ENCODE measurements at regions of chr4 and their contacts with region 1.

Region 1: DNA sequence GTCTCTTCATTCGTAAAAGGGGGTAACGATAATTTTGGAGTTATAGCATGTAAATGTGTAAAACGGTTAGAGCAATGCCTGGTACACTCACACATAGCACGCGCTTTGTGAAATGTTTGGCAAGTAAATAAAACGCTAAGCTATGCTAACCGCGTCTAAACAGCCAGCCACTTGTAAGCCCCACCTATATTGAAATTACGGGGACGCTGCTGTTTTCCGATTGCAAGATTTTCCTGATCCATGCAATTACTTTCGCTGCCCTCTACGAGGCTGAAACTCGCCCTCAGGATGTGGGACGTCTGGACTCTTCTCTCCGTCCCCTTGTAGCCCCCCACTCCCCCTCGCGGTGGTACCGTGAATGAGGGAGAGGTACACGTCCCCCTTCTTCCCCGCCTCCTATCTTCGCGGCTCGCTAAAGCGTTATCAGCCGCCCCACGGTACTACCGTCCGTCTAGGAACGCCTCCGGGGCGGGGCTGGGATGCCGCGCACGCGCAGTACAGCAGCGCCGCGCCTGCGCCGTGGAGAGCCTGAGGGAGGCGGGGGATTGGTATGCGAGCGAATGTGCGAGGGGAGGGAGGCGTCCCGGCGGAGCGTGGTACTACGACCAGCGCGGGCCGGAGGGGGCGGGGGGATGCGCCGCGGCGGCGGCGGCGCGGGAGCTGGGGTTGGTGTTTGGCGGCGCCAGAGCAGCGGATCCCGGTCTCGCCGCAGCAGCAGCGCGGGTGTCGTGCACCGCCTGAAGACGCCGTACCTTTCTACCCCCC is at the start of gene STIM2:
- DNase-seq: peak; percentile 98
- H3K4me3 ChIP-seq: peak within 1 kb of the TSS; percentile 71 to 95 (median 86)
- H3K27ac ChIP-seq: peak within 1 kb of the TSS; percentile 95 to 98 (median 97)
- H3K4me1 ChIP-seq: peaks cover 0 to 41% (median 27%) of the 10 kb centered on the region in 4 donors
- H3K27me3 ChIP-seq: no peaks in the 10 kb centered on the region
- CTCF ChIP-seq: peak in 2 of 4 experiments; percentile 29 to 37
- EP300 ChIP-seq: no peak
- POLR2A ChIP-seq: peak; percentile 46 to 77
- total RNA-seq, gene STIM2: 10.7 to 15.3 (median 14.7) TPM

Region 2: DNA sequence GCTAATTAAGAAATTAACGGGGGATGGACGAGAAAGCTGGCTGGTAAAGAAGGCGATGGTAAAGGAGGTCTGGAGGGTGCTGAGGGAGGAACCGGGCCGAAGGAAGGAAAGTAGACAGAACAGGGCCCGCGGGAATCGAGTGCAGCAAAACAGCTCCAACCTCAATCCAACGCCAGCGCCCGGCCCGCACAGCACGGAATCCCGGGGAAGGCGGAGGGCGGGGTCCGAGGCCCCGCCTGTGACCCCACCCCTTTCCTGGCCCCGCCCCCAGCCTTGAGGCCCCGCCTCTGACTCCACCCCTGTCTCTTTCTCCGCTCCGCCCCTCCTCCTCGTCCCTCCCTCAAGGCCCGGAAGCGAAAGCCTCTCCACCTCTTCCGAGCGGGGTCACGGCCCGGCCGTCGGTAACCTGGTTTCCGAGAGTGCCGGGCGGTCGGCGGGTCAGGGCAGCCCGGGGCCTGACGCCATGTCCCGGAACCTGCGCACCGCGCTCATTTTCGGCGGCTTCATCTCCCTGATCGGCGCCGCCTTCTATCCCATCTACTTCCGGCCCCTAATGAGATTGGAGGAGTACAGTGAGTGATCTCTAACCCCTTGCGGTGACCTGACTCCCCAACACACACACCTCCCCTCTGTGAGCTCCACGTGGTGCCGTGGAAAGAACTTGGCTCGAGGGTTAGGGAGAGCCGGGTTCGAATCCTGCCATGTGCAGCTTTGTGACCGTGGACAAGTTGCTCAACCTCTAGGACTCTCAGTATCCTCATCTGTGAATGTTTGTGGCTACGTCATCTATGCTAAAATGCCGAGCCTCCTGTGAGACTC is 946.3 kb before region 1 on chr4 and contains the start of gene SMIM20:
- intact Hi-C with region 1: loop called (anchors 5 kb)
- DNase-seq: peak; percentile 96
- H3K4me3 ChIP-seq: peak within 1 kb of the TSS; percentile 59 to 84 (median 72)
- H3K27ac ChIP-seq: peak within 1 kb of the TSS; percentile 84 to 92 (median 89)
- H3K4me1 ChIP-seq: peaks cover 0 to 19% (median 13%) of the 10 kb centered on the region in 4 donors
- H3K27me3 ChIP-seq: no peaks in the 10 kb centered on the region
- CTCF ChIP-seq: no peak
- EP300 ChIP-seq: no peak
- POLR2A ChIP-seq: peak; percentile 44 to 59
- total RNA-seq, gene SMIM20: 33.8 to 46.7 (median 40.8) TPM

Region 3: GRCh38 chr4:26583865-26584652 is 276.3 kb before region 1 on chr4 and contains the start of gene TBC1D19:
- intact Hi-C with region 1: loop called (anchors 10 kb)
- DNase-seq: peak; percentile 95
- H3K4me3 ChIP-seq: peak within 1 kb of the TSS; percentile 61 to 73 (median 70)
- H3K27ac ChIP-seq: peak within 1 kb of the TSS; percentile 74 to 80 (median 79)
- H3K4me1 ChIP-seq: peaks cover 0 to 21% (median 13%) of the 10 kb centered on the region in 4 donors
- H3K27me3 ChIP-seq: no peaks in the 10 kb centered on the region
- CTCF ChIP-seq: no peak
- EP300 ChIP-seq: no peak
- POLR2A ChIP-seq: no peak
- total RNA-seq, gene TBC1D19: 21.6 to 31.8 (median 27.2) TPM

Region 4: GRCh38 chr4:26936284-26937065 is 76.1 kb after region 1 on chr4:
- intact Hi-C with region 1: no loop called
- DNase-seq: no peak
- H3K4me3 ChIP-seq: no peak overlapping the region
- H3K27ac ChIP-seq: no peak overlapping the region
- H3K4me1 ChIP-seq: no peaks in the 10 kb centered on the region
- H3K27me3 ChIP-seq: no peaks in the 10 kb centered on the region
- CTCF ChIP-seq: no peak
- EP300 ChIP-seq: no peak
- POLR2A ChIP-seq: no peak

Region 5: GRCh38 chr4:26992657-26993361 is 132.5 kb after region 1 on chr4:
- intact Hi-C with region 1: loop called (anchors 5 kb)
- DNase-seq: no peak
- H3K4me3 ChIP-seq: no peak overlapping the region
- H3K27ac ChIP-seq: peak overlapping the region; percentile 11 to 41 (median 28)
- H3K4me1 ChIP-seq: peaks cover 0 to 27% (median 26%) of the 10 kb centered on the region in 4 donors
- H3K27me3 ChIP-seq: no peaks in the 10 kb centered on the region
- CTCF ChIP-seq: no peak
- EP300 ChIP-seq: no peak
- POLR2A ChIP-seq: no peak

Region 6: DNA sequence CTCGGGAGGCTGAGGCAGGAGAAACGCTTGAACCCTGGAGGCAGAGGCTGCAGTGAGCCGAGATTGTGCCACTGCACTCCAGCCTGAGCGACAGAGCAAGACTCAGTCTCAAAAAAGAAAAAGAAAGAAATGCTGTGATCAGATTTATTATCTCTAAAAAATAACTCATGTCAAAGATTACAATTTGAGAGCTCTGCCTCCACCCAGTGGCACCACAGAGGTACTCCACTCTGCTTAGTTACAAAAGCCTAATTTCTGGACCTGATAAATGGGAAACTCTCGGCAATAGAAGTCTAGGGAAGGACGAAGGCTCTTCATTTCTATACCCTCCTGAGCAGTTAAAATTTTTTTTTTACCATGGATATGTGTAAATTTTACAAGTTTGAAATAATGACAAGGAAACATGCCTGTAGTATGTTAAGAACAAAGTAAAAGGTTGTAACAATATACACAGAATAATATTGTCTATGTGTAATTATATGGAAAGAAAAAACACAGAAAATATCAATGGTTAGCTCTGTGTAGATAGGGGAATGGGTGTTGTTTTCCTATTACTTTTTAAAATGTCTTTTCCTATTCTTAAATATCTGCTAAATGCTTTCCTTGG is 150.1 kb after region 1 on chr4:
- intact Hi-C with region 1: loop called (anchors 2 kb)
- DNase-seq: peak; percentile 74
- H3K4me3 ChIP-seq: no peak overlapping the region
- H3K27ac ChIP-seq: peak overlapping the region in 2 of 4 donors; percentile 13 to 22
- H3K4me1 ChIP-seq: peaks cover 0 to 53% (median 24%) of the 10 kb centered on the region in 4 donors
- H3K27me3 ChIP-seq: no peaks in the 10 kb centered on the region
- CTCF ChIP-seq: peak; percentile 63 to 88 (median 84)
- EP300 ChIP-seq: no peak
- POLR2A ChIP-seq: no peak

Measured in sigmoid colon (tissue), 7 donors.